Activated CD4-positive, alpha-beta memory T cell treated with anti-CD3 and anti-CD28 coated beads for 36 hours (primary cell): ENCODE measurements at regions of chr2 and their contacts with region 1.

Region 1: GRCh38 chr2:3379647-3380534 is at the start of gene TRAPPC12:
- DNase-seq: peak; percentile 95
- H3K4me3 Mint-ChIP-seq: peak within 1 kb of the TSS; percentile 98
- H3K27ac Mint-ChIP-seq: peak within 1 kb of the TSS; percentile 97
- H3K4me1 Mint-ChIP-seq: peaks cover 39% of the 10 kb centered on the region
- H3K27me3 Mint-ChIP-seq: no peaks in the 10 kb centered on the region
- total RNA-seq, gene TRAPPC12: 61.4 to 64.3 TPM

Region 2: GRCh38 chr2:3518496-3519254 is 138.8 kb after region 1 on chr2:
- CTCF ChIA-PET with region 1: no interaction called
- POLR2A ChIA-PET with region 1: interaction called, 4 read pairs
- intact Hi-C with region 1: loop called (anchors 1 kb)
- DNase-seq: peak; percentile 99
- H3K4me3 Mint-ChIP-seq: peak overlapping the region; percentile 84
- H3K27ac Mint-ChIP-seq: peak overlapping the region; percentile 89
- H3K4me1 Mint-ChIP-seq: peaks cover 38% of the 10 kb centered on the region
- H3K27me3 Mint-ChIP-seq: no peaks in the 10 kb centered on the region

Region 3: DNA sequence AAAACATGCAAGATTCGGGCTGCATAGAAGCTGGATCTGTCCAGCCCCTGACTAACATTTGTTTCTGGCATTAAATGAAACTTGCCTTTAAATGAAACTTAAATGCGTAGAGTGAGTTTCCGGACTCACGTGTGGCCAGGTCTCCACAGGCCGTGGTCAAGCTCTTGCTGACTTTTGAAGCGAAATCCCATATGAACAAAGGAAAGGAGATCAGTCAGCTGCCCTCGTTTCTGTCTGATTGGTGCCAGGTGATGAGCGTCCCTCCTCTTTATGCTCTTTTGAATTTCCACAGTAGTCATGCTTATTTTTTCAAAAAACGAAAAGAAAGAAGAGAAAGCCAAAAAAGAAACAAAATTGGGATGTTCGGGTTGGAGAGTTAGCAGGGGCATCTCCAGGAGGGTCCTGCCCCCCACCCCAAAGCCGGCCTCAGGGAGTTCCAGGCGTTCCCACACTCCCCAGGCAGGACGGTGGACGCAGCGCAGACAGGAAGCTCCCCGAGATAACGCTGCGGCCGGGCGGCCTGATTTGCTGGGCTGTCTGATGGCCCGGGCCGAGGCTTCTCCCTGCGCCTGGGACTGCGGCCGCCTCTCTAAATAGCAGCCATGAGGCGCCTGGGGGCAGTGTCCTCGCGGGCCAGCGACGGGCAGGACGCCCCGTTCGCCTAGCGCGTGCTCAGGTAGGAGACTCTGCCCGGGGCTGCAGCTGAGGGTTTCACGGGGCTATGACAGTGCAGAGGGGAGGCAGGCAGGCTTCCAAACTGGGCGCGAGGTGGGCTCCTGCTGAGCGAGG is 214.8 kb after region 1 on chr2 and contains the start of gene COLEC11:
- CTCF ChIA-PET with region 1: no interaction called
- POLR2A ChIA-PET with region 1: no interaction called
- intact Hi-C with region 1: no loop called
- DNase-seq: no peak
- H3K4me3 Mint-ChIP-seq: no peak within 1 kb of the TSS
- H3K27ac Mint-ChIP-seq: no peak within 1 kb of the TSS
- H3K4me1 Mint-ChIP-seq: peaks cover 16% of the 10 kb centered on the region
- H3K27me3 Mint-ChIP-seq: peaks cover 2% of the 10 kb centered on the region
- total RNA-seq, gene COLEC11: 0.31 TPM in 1 of 2 experiments, not detected in the other